Mammary epithelial cell (primary cell): ENCODE measurements at regions of chr2 and their contacts with region 1.

Region 1: GRCh38 chr2:28233164-28233676 is 159.4 kb upstream of the FOSL2 start:
- DNase-seq: no peak
- H3K4me3 ChIP-seq: no peak overlapping the region
- H3K27ac ChIP-seq: no peak overlapping the region
- H3K4me1 ChIP-seq: no peaks in the 10 kb centered on the region
- H3K27me3 ChIP-seq: no peaks in the 10 kb centered on the region
- CTCF ChIP-seq: no peak

Region 2: DNA sequence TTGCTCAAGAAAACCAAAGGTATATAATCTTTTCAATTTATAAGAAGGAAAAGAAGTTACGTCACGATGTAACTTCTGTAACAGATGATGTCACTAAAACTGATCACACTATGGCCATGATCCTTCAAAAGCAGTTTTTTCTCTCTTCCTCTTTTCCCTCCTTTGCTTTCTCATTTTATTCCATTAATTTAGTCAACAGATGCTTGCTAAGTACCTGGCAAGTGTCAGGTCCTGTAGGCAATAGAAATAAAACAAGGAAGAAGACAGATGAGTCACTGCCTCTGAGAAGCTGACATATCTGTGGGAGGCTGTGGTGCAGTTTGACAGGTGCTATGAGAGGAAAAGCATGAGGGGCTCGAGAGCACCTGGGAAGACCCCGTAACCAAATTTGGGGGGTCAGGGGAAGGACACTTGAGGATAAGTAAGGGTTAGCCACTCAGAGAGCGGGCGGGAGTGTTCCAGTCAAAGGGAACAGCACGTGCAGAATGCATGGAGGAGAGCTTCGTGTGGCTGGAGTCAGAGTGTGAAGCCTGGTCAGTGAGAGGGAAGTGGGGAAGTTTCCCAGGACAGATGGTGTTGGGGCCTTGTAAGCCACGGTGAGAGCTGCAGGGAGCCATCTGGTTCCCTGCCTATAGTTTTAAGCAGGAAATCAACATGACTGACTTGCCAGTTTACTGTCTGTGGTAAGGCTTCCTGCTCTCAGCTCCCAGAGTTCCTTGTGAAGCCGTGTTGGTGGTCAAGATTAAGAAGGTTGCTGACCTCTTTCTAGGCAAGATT is 39.4 kb before region 1 on chr2:
- CTCF ChIA-PET with region 1: no interaction called
- dilution Hi-C with region 1: no loop called
- in situ Hi-C with region 1: no loop called
- intact Hi-C with region 1: no loop called
- DNase-seq: peak; percentile 21
- H3K4me3 ChIP-seq: no peak overlapping the region
- H3K27ac ChIP-seq: no peak overlapping the region
- H3K4me1 ChIP-seq: no peaks in the 10 kb centered on the region
- H3K27me3 ChIP-seq: no peaks in the 10 kb centered on the region
- CTCF ChIP-seq: no peak

Region 3: GRCh38 chr2:28292491-28292890 is 59.3 kb after region 1 on chr2:
- CTCF ChIA-PET with region 1: no interaction called
- dilution Hi-C with region 1: loop called (anchors 5 kb)
- in situ Hi-C with region 1: no loop called
- intact Hi-C with region 1: no loop called
- DNase-seq: no peak
- H3K4me3 ChIP-seq: no peak overlapping the region
- H3K27ac ChIP-seq: no peak overlapping the region
- H3K4me1 ChIP-seq: peaks cover 23% of the 10 kb centered on the region
- H3K27me3 ChIP-seq: no peaks in the 10 kb centered on the region
- CTCF ChIP-seq: no peak

Region 4: DNA sequence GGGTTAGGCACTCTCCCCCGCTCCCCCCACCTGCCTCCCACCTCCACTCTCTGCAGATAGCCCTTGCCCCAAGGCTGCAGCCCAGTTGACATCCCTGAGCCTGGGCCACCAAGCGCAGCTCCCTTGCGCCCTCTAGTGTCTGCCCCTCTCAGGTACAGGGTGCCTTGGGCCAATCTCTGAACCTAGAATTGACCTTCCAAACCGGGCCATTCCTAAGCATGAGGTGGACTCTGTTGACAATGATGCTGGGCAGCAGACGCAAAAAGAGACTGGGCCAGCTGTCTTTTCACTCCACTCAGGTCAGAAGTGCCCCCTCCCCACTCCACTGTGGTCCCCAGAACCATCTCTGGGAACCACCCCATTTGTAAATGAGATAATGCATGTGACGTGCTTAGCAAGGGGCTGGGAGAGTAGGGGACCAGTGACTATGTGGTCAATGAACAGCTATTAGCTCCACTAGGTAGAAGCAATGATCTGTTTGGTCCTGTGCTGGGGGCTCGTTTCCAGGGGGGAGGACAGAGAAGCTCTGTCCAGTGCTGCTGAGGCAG is 219.4 kb after region 1 on chr2:
- CTCF ChIA-PET with region 1: no interaction called
- dilution Hi-C with region 1: no loop called
- in situ Hi-C with region 1: no loop called
- intact Hi-C with region 1: no loop called
- DNase-seq: no peak
- H3K4me3 ChIP-seq: no peak overlapping the region
- H3K27ac ChIP-seq: no peak overlapping the region
- H3K4me1 ChIP-seq: peaks cover 52% of the 10 kb centered on the region
- H3K27me3 ChIP-seq: no peaks in the 10 kb centered on the region
- CTCF ChIP-seq: peak; percentile 98 to 99